Mammary epithelial cell (primary cell): ENCODE measurements at regions of chr14 and their contacts with region 1.

Region 1: GRCh38 chr14:80954687-80955299 is 628 bp upstream of the TSHR start:
- DNase-seq: peak; percentile 63
- H3K4me3 ChIP-seq: peak overlapping the region; percentile 36 to 58 (median 42)
- H3K27ac ChIP-seq: no peak overlapping the region
- H3K4me1 ChIP-seq: no peaks in the 10 kb centered on the region
- H3K27me3 ChIP-seq: peaks cover 2% of the 10 kb centered on the region
- CTCF ChIP-seq: peak; percentile 61 to 82

Region 2: DNA sequence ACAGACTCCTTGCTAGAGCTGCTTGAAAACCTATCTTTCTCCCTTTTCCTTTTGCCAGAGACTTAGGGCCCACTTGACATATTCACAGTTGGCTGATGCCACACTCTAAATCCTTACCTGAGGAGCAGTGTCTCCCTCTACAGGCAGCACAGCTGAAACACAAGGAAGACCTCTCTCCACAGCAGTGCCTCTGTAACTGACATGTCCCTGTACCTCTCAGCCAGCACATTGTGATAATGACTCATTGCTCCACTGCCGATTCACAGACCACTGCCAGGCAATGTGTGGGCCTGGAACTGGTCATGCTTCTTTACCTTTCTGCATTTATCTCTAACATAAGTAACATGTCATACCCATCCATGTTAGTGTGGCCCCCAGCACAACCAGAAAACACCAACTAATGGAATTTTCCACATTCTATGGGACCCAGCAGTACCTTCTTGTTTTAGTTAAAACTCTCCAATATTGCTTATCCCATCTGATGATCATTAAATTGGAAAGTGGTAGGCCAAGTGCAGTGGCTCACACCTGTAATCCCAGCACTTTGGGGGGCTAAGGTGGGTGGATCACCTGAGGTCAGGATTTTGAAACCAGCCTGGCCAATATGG is 209.5 kb after region 1 on chr14:
- CTCF ChIA-PET with region 1: no interaction called
- dilution Hi-C with region 1: no loop called
- in situ Hi-C with region 1: no loop called
- intact Hi-C with region 1: loop called (anchors 1 kb)
- DNase-seq: peak; percentile 85
- H3K4me3 ChIP-seq: no peak overlapping the region
- H3K27ac ChIP-seq: no peak overlapping the region
- H3K4me1 ChIP-seq: no peaks in the 10 kb centered on the region
- H3K27me3 ChIP-seq: no peaks in the 10 kb centered on the region
- CTCF ChIP-seq: peak; percentile 91 to 95